AG04450 (cell line): ENCODE measurements at regions of chr19 and their contacts with region 1.

Region 1: GRCh38 chr19:43595999-43596841 is at the starts of genes IRGQ and ZNF576:
- DNase-seq: peak; percentile 99
- H3K4me3 ChIP-seq: peak within 1 kb of the TSS; percentile 79
- H3K27ac ChIP-seq: peak within 1 kb of the TSS; percentile 99
- H3K27me3 ChIP-seq: no peaks in the 10 kb centered on the region
- CTCF ChIP-seq: 0 out of 2 replicates have a peak, but pooled peaks have one; percentile 6
- polyA plus RNA-seq, gene IRGQ: 11.2 and 11.6 TPM in 2 replicates
- polyA plus RNA-seq, gene ZNF576: 9.3 and 11.3 TPM in 2 replicates

Region 2: GRCh38 chr19:43532962-43533545 is 63.2 kb before region 1 on chr19 and contains the start of gene ZNF575:
- CTCF ChIA-PET with region 1: interaction called, 52 read pairs
- POLR2A ChIA-PET with region 1: interaction called, 3 read pairs
- DNase-seq: peak; percentile 93
- H3K4me3 ChIP-seq: peak within 1 kb of the TSS; percentile 68
- H3K27ac ChIP-seq: peak within 1 kb of the TSS; percentile 91
- H3K27me3 ChIP-seq: no peaks in the 10 kb centered on the region
- CTCF ChIP-seq: no peak
- polyA plus RNA-seq, gene ZNF575: 0.16 and 0.17 TPM in 2 replicates

Region 3: GRCh38 chr19:43545981-43546380 is 50.2 kb before region 1 on chr19:
- CTCF ChIA-PET with region 1: no interaction called
- POLR2A ChIA-PET with region 1: no interaction called
- DNase-seq: no peak
- H3K4me3 ChIP-seq: no peak overlapping the region
- H3K27ac ChIP-seq: no peak overlapping the region
- H3K27me3 ChIP-seq: no peaks in the 10 kb centered on the region
- CTCF ChIP-seq: no peak

Region 4: DNA sequence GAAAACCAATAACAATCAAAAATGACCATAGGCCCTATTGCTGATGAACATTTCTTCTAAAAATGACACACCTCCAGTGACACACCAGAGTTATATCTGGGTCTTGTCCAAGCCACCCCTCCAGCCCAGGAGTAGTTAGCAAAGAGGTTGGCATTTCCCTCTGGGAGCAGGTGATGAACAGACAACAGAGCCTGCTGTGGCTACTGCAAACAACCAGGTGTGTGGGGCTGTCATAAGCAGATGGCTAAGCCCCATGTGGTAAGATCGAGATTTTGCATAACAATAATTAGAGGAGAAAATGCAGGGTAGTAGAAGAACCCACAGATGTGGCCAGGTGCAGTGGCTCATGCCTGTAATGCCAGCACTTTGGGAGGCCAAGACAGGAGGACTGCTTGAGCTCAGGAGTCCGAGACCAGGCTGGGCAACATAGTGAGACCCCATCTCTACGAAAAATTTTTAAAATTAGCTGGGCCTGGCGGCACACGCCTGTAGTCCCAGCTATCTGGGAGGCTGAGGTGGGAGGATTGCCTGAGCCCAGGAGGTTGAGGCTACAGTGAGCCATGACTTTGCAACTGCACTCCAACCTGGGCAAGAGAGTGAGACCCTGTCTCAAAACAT is 25.9 kb before region 1 on chr19:
- CTCF ChIA-PET with region 1: interaction called, 17 read pairs
- POLR2A ChIA-PET with region 1: interaction called, 8 read pairs
- DNase-seq: no peak
- H3K4me3 ChIP-seq: no peak overlapping the region
- H3K27ac ChIP-seq: no peak overlapping the region
- H3K27me3 ChIP-seq: no peaks in the 10 kb centered on the region
- CTCF ChIP-seq: no peak

Region 5: GRCh38 chr19:43581467-43581866 is 14.8 kb before region 1 on chr19:
- CTCF ChIA-PET with region 1: interaction called, 10 read pairs
- POLR2A ChIA-PET with region 1: interaction called, 5 read pairs
- DNase-seq: no peak
- H3K4me3 ChIP-seq: no peak overlapping the region
- H3K27ac ChIP-seq: no peak overlapping the region
- H3K27me3 ChIP-seq: peaks cover 2% of the 10 kb centered on the region
- CTCF ChIP-seq: no peak

Region 6: DNA sequence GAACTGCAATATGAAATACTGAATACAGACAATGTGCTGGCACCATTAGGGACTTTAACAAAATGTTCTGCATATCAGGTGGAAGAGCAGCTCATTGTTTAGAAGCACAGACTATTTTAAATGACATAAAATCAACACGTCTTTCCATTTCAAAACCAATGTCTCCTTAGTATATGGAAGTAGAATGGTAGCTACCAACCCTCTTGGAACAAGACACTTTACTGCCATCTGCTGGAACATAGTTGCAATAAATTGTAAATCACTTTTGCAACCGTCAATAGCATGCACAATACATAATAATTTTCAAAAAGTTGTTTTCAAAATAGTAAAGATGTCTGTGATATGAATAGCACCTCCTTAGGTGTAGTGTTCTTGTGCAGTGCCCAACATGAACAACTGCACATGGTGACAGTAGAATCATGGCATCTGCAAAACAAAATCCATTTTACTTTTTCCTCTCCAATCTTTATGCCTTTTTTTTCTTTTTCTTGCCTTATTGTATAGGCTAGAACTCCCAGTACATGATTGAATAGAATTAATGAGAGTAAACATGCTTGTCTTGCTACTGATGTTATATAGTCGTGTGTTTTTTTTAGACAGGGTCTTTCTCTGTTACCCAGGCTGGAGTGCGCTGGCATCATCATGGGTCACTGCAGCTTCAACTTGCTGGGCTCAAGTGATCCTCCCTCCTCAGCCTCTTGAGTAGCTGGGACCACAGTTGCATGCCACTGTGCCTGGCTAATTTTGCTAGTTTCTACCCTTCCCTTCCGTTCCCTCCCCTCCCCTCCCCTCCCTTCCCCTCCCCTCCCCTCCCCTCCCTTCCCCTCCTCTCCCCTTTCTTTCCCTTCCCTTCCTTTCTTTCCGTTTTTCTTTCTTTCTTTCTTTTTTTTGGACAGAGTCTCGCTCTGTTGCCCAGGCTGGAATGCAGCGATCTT is 213.8 kb after region 1 on chr19:
- CTCF ChIA-PET with region 1: interaction called, 10 read pairs
- POLR2A ChIA-PET with region 1: no interaction called
- DNase-seq: peak; percentile 32
- H3K4me3 ChIP-seq: no peak overlapping the region
- H3K27ac ChIP-seq: no peak overlapping the region
- H3K27me3 ChIP-seq: peaks cover 4% of the 10 kb centered on the region
- CTCF ChIP-seq: peak; percentile 64